ENCODE measurements at regions of chr14 and their contacts with region 1.

Region 1: GRCh38 chr14:45253068-45253753 is at the start of gene MIS18BP1:
- DNase-seq: peak; percentile 94
- H3K4me3 Mint-ChIP-seq: peak within 1 kb of the TSS; percentile 91
- H3K27ac Mint-ChIP-seq: peak within 1 kb of the TSS; percentile 98
- H3K4me1 Mint-ChIP-seq: peaks cover 21% of the 10 kb centered on the region
- H3K27me3 Mint-ChIP-seq: no peaks in the 10 kb centered on the region
- total RNA-seq, gene MIS18BP1: 56.4 and 62.9 TPM in 2 replicates

Region 2: DNA sequence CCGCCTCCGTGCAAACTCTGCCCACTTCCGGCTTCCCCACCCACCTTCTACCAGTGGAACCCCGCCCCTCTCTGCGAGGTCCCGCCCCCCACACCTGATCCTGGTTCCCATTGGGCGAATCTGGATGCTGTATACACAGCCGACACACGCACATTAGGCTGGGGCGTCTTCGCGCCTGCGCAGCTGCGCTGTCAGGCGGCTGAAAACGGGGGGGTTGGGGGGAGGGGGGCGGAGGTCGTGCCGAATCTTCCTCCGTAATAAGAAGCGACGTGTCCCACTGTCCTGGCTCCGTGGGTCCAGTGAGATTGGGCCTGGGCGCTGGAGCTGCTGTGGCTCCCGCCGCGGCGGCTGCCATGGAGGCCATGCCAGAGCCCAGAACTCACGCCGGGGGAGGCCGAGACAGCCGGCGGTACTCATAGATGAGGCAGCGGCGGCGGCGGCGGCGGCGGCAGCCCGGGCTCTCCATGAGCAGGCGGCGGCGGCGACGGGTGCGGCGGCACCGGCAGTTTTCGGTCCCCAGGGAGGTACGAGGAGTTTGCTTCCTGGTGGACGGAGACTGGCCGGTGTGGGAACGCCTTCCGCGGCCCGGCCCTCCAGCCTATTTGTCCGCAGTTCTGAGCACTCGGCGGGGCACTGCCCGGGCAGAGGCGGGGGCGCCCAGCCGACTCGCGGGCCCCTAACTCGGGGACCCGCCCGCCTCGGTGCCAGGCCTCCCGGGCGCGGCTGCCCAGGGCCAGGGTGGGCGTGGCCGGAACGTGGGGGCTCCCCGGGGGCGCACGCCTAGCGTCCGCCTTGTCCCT is 356.0 kb before region 1 on chr14:
- intact Hi-C with region 1: loop called (anchors 2 kb)
- DNase-seq: peak; percentile 86
- H3K4me3 Mint-ChIP-seq: peak overlapping the region; percentile 92
- H3K27ac Mint-ChIP-seq: peak overlapping the region; percentile 92
- H3K4me1 Mint-ChIP-seq: peaks cover 13% of the 10 kb centered on the region
- H3K27me3 Mint-ChIP-seq: no peaks in the 10 kb centered on the region

Region 3: DNA sequence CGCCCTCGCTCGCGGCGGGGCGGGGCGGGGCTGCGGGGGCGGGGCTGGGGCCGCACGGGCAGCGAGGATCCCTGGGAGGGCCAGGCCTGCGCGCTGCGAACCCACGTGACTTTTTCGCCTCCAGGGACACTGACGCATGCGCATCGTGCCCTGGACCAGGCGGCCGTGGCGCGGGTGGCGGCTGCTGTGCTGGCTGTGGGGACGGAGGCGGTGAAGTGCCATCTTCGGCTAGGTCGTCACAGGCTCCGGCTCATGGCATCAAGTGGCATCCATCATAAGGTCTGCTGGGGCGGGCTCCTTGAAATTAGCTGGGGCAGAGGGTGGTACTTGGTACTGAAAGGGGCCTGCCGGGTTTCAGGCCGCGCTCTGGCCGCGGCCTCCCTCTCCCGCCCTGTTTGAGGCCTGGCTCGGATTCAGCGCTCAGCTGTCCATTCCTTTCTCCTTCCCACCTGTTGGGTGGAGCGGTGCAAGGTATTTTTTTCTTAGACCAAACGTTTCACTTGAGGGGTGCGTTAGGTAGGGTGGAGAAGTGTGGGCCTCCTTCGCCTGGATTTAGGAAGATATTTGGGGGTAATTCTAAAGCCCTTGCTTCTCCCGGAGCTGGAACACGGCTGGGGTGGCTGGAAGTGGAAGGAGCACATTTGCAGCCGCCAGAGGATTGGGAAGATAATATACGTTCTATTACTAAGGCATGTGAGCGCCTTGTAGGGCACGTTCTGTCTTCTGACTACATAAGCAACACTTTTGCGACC is 169.1 kb before region 1 on chr14 and contains the start of gene PRPF39:
- intact Hi-C with region 1: loop called (anchors 2 kb)
- DNase-seq: peak; percentile 94
- H3K4me3 Mint-ChIP-seq: peak within 1 kb of the TSS; percentile 97
- H3K27ac Mint-ChIP-seq: peak within 1 kb of the TSS; percentile 97
- H3K4me1 Mint-ChIP-seq: peaks cover 46% of the 10 kb centered on the region
- H3K27me3 Mint-ChIP-seq: no peaks in the 10 kb centered on the region
- total RNA-seq, gene PRPF39: 47.6 and 47.8 TPM in 2 replicates

Region 4: GRCh38 chr14:45201905-45202304 is 51.3 kb before region 1 on chr14:
- intact Hi-C with region 1: loop called (anchors 5 kb)
- DNase-seq: no peak
- H3K4me3 Mint-ChIP-seq: no peak overlapping the region
- H3K27ac Mint-ChIP-seq: peak overlapping the region; percentile 40
- H3K4me1 Mint-ChIP-seq: peaks cover 16% of the 10 kb centered on the region
- H3K27me3 Mint-ChIP-seq: no peaks in the 10 kb centered on the region

Region 5: DNA sequence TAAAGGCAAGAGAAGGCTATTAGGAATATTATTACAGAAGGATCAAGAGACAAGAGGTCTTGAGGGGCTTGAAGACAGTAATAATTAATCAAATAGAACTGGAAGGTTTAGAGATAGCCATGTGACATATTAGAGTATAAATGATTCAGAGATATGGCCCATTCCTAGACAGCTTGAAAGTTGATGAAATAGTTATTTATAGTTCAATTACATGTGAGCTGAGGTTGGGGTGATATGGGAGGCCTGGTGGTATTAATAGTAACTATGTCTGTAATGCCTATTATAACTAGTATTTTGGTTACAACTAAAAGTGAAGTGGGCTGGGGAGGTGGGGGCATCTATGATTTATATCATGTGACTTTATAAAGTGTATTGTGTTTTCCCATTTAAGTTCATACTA is 13.9 kb after region 1 on chr14:
- intact Hi-C with region 1: loop called (anchors 1 kb)
- DNase-seq: no peak
- H3K4me3 Mint-ChIP-seq: no peak overlapping the region
- H3K27ac Mint-ChIP-seq: no peak overlapping the region
- H3K4me1 Mint-ChIP-seq: peaks cover 3% of the 10 kb centered on the region
- H3K27me3 Mint-ChIP-seq: peaks cover 6% of the 10 kb centered on the region

Measured in activated T-helper 2 cell treated with anti-CD3 and anti-CD28 coated beads, Interferon-gamma antibody, Interleukin-2, Interleukin-4, amounts not matched to agents 10 μg/mL and 5 μg/mL and 100 μg/mL, durations not matched to agents 14 hours and 24 hours and 36 hours (primary cell).